Naive thymus-derived CD8-positive, alpha-beta T cell (primary cell): ENCODE measurements at regions of chr2 and their contacts with region 1.

Region 1: GRCh38 chr2:196914867-196915460 is 11.5 kb downstream of the PGAP1 start:
- DNase-seq: peak in 5 of 10 donors; percentile 4 to 65 (median 30)
- ATAC-seq: peak; percentile 97
- H3K4me3 Mint-ChIP-seq: peak overlapping the region; percentile 31 to 79 (median 62)
- H3K27ac Mint-ChIP-seq: peak overlapping the region; percentile 56 to 97 (median 90)
- H3K4me1 Mint-ChIP-seq: peaks cover 15 to 32% (median 21%) of the 10 kb centered on the region in 4 donors
- H3K27me3 Mint-ChIP-seq: no peaks in the 10 kb centered on the region

Region 2: GRCh38 chr2:196926562-196927375 is 11.8 kb after region 1 on chr2 and contains the start of gene PGAP1:
- POLR2A ChIA-PET with region 1: interaction called, 17 read pairs
- DNase-seq: peak; percentile 68 to 89 (median 79)
- ATAC-seq: peak; percentile 83 to 89
- H3K4me3 Mint-ChIP-seq: peak within 1 kb of the TSS; percentile 91 to 99 (median 96)
- H3K27ac Mint-ChIP-seq: peak within 1 kb of the TSS; percentile 87 to 97 (median 92)
- H3K4me1 Mint-ChIP-seq: peaks cover 17 to 41% (median 33%) of the 10 kb centered on the region in 4 donors
- H3K27me3 Mint-ChIP-seq: peaks cover 0 to 3% (median 0%) of the 10 kb centered on the region in 5 donors
- polyA plus RNA-seq, gene PGAP1: 0.64 to 1.6 (median 0.67) TPM